ENCODE measurements at regions of chr12 and their contacts with region 1.

Region 1: GRCh38 chr12:105676694-105677093 is 346.2 kb downstream of the C12orf75 start:
- DNase-seq: peak; percentile 81
- H3K4me3 ChIP-seq: no peak overlapping the region
- H3K27ac ChIP-seq: peak overlapping the region; percentile 43 to 72 (median 62)
- H3K4me1 ChIP-seq: peaks cover 13 to 44% (median 20%) of the 10 kb centered on the region in 4 donors
- H3K27me3 ChIP-seq: no peaks in the 10 kb centered on the region
- CTCF ChIP-seq: no peak
- EP300 ChIP-seq: no peak
- POLR2A ChIP-seq: no peak

Region 2: GRCh38 chr12:104329707-104330532 is 1346.8 kb before region 1 on chr12:
- in situ Hi-C with region 1: no loop called
- intact Hi-C with region 1: loop called (anchors 5 kb)
- DNase-seq: no peak
- H3K4me3 ChIP-seq: no peak overlapping the region
- H3K27ac ChIP-seq: no peak overlapping the region
- H3K4me1 ChIP-seq: no peaks in the 10 kb centered on the region
- H3K27me3 ChIP-seq: no peaks in the 10 kb centered on the region
- CTCF ChIP-seq: no peak
- EP300 ChIP-seq: no peak
- POLR2A ChIP-seq: no peak

Region 3: DNA sequence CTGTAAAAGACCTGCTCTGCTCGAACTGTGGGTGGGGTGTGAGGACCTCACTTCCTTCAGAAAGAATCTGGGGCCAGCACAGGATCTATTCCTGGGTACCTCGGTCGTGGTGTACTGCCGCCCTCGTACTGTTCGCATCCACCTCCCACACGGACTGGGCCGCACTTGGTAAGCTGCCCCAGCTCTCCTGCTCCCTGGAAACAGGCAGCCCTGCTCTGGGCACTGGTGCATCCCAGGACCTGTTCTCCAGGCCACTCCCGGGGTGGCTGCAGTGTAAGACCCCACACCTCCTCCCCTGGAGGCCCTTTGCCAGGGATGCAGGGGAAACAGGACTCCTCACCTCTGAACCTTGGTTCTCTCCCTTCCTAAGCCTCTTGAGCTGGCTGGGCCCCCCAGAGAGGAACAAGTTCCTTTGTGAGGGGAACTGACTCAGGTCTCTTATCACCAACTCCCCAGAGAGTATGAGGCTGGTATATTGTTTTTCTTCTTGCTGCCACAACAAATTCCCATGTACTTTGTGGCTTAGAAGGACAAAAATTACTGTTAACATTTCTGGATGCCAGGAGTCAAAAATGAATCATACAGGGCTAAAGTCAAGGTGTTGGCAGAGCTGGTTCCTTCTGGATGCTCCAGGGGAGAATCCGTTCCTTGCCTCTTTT is 185.6 kb after region 1 on chr12:
- in situ Hi-C with region 1: no loop called
- intact Hi-C with region 1: no loop called
- DNase-seq: no peak
- H3K4me3 ChIP-seq: no peak overlapping the region
- H3K27ac ChIP-seq: no peak overlapping the region
- H3K4me1 ChIP-seq: no peaks in the 10 kb centered on the region
- H3K27me3 ChIP-seq: no peaks in the 10 kb centered on the region
- CTCF ChIP-seq: no peak
- EP300 ChIP-seq: no peak
- POLR2A ChIP-seq: no peak

Region 4: DNA sequence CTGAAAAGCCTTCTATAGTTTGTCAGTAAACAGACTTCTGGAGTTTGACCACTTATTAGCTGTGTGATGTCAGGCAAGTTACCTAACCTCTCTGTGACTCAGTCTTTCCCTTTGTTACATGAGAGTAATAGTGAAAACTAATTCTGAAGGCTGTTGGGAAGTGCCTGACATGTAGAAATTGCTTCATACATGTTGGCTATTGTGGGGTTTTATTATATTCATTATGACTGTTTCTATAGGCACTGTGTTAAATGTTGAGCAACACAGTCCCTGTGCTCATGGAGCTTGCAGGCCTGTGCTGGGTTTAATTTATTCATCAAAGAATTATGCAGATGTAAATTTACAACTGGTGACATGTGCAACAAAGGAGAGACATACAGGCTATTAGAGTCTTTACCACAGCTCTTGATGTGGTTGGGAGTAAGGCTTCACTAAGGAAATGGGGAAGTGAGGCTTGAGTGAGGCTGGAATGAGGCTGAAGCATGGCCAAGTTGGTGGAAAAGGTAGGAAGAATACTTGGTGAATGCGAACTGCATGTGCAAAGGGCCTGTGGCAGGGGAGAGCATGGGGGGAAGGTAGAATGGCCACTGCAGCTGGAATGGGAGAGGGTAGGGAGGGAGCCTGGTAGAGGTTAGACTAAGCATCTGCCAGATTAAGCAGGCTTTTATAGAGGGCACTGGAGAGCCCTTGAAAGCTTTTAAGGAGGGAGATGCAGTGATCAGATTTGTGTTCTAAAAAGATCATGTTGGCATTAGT is 1653.1 kb after region 1 on chr12:
- in situ Hi-C with region 1: no loop called
- intact Hi-C with region 1: no loop called
- DNase-seq: no peak
- H3K4me3 ChIP-seq: no peak overlapping the region
- H3K27ac ChIP-seq: no peak overlapping the region
- H3K4me1 ChIP-seq: no peaks in the 10 kb centered on the region
- H3K27me3 ChIP-seq: no peaks in the 10 kb centered on the region
- CTCF ChIP-seq: no peak
- EP300 ChIP-seq: no peak
- POLR2A ChIP-seq: no peak

Measured in transverse colon (tissue), 4 donors.